ENCODE measurements at regions of chr1 and their contacts with region 1.

Region 1: GRCh38 chr1:112298558-112298957 is 97.5 kb upstream of the CTTNBP2NL start:
- DNase-seq: peak; percentile 72
- H3K4me3 ChIP-seq: no peak overlapping the region
- H3K27ac ChIP-seq: no peak overlapping the region
- H3K4me1 ChIP-seq: no peaks in the 10 kb centered on the region
- H3K27me3 ChIP-seq: peaks cover 7% of the 10 kb centered on the region
- CTCF ChIP-seq: peak; percentile 78

Region 2: DNA sequence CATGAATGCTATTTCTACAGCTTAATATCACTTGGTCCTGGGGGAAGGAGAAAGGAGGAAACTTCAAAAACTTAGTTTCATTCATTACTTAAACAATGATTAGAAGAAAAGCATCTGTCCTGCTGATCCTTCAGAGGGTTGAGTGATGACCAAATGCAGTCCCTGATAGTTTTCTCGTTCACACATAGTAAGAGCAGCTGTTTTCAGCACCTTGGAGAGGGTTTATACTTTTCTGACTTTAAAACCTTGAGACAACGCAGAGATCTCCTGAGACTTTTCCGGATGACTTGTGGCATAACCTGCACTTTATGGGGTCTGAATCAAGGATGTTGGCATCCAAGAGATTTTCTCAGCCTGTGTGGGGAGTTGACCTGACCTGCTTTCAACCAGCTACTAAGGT is 215.1 kb before region 1 on chr1:
- CTCF ChIA-PET with region 1: no interaction called
- POLR2A ChIA-PET with region 1: no interaction called
- intact Hi-C with region 1: no loop called
- DNase-seq: peak; percentile 32
- H3K4me3 ChIP-seq: no peak overlapping the region
- H3K27ac ChIP-seq: no peak overlapping the region
- H3K4me1 ChIP-seq: no peaks in the 10 kb centered on the region
- H3K27me3 ChIP-seq: peaks cover 15% of the 10 kb centered on the region
- CTCF ChIP-seq: no peak

Region 3: DNA sequence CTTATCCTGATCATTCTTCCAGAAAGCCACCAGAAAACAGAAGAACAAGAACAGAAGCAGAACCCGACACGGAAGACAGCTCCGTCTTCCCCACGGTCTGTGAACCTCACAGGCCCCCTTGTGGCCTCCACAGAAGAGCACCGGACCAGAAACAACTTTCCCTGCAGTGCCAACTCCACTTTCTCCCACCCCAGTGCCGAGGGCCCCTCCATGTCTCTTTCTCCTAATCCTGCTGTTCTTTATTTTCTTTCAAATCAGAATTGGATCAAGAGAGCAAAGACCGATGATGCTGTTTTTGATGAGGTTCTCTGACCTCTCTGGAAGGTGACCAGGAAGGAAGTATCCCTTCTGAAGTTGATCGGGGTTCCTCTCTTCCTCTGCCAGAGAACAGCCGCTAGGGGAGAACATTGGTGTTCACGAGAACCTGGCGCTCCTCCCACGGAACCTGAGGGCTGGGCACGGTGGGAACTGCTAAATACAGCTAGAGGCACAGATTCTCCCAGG is 38.5 kb after region 1 on chr1:
- CTCF ChIA-PET with region 1: interaction called, 11 read pairs
- POLR2A ChIA-PET with region 1: no interaction called
- intact Hi-C with region 1: no loop called
- DNase-seq: peak; percentile 45
- H3K4me3 ChIP-seq: no peak overlapping the region
- H3K27ac ChIP-seq: no peak overlapping the region
- H3K4me1 ChIP-seq: no peaks in the 10 kb centered on the region
- H3K27me3 ChIP-seq: peaks cover 68% of the 10 kb centered on the region
- CTCF ChIP-seq: peak; percentile 61